A549 (cell line): ENCODE measurements at regions of chr15 and their contacts with region 1.

Region 1: DNA sequence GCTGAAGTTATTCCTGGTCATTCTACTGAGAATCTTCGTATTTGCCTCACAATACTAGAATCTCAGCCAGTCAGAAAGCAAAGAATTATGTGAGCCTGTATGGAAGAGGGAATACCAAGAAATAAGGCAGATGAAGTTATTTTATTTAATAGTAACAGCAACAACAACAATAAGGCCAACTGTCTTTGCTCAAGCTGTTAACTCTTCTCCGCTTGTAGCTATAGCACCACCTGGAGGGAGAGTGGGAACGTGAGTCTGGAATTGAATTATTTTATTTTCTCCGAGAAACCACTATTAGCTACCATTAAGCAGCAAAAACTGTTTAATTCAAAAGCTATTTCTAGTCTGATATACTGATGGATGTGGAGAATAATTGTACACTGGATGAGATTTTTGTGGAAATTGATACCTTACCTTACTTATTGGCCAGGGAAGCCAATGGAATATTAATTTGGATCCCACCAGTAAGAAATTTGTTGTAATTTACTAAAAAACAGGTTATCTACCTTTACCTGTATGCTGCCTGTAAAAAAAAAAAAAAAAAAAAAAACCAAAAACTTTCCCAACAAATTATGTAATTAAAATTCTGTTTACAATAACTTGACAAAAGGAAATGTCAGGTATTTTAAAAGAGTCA is 50.1 kb downstream of the CALML4 start:
- DNase-seq: peak; percentile 39 to 77
- ATAC-seq: peak; percentile 81 to 89; a peak in 5 of 6 replicates
- H3K4me3 ChIP-seq: no peak overlapping the region
- H3K27ac ChIP-seq: no peak overlapping the region; a peak in 1 of 6 replicates
- H3K4me1 ChIP-seq: peaks cover 4% of the 10 kb centered on the region; the same call in 1 of the 3 replicates
- CTCF ChIP-seq: peak; percentile 99
- EP300 ChIP-seq: no peak
- POLR2A ChIP-seq: no peak
- RAD21 ChIP-seq: peak; percentile 96 to 97

Region 2: GRCh38 chr15:67839929-67840748 is 314.9 kb before region 1 on chr15 and contains the start of gene RNU6-1:
- CTCF ChIA-PET with region 1: interaction called, 12 read pairs
- POLR2A ChIA-PET with region 1: interaction called, 7 read pairs
- DNase-seq: peak; percentile 95 to 98
- ATAC-seq: peak; percentile 62 to 84
- H3K4me3 ChIP-seq: peak within 1 kb of the TSS; percentile 69
- H3K27ac ChIP-seq: peak within 1 kb of the TSS; percentile 87 to 92
- H3K4me1 ChIP-seq: peaks cover 13% of the 10 kb centered on the region
- CTCF ChIP-seq: no peak; the same call in 2 of the 3 replicates
- EP300 ChIP-seq: no peak
- POLR2A ChIP-seq: peak; percentile 83
- RAD21 ChIP-seq: peak in 1 of 2 experiments; percentile 1; a peak in 1 of 5 replicates
- polyA plus RNA-seq, gene RNU6-1: not detected in 2 replicates

Region 3: GRCh38 chr15:68053701-68054627 is 101.1 kb before region 1 on chr15 and contains the start of gene PIAS1:
- CTCF ChIA-PET with region 1: interaction called, 17 read pairs
- POLR2A ChIA-PET with region 1: interaction called, 10 read pairs
- DNase-seq: peak; percentile 91 to 95
- ATAC-seq: peak; percentile 92 to 95
- H3K4me3 ChIP-seq: peak within 1 kb of the TSS; percentile 90
- H3K27ac ChIP-seq: peak within 1 kb of the TSS; percentile 91 to 96
- H3K4me1 ChIP-seq: peaks cover 32% of the 10 kb centered on the region
- CTCF ChIP-seq: 0 out of 3 replicates have a peak, but pooled peaks have one; percentile 7
- EP300 ChIP-seq: no peak
- POLR2A ChIP-seq: peak; percentile 80
- RAD21 ChIP-seq: no peak; a peak in 2 of 5 replicates
- polyA plus RNA-seq, gene PIAS1: 49.5 and 53.7 TPM in 2 replicates

Region 4: DNA sequence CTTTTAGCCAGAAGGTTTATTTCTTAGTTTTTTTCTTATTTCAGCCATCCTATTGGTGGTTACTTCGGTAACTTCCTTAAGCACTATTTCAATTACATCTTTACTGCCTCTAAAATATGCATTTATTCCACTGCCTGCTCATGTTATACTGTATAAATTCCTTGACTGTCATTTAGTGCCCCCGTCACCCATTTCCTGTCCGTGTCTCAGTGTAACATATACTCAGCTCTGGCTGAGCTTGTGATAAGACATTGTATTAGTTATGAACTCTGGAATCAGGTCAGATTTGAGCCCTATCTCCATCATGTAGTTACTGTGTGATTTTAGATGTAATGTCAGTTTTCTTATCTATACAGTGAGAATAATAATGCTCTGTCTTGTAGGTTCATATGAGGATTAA is 76.7 kb before region 1 on chr15:
- CTCF ChIA-PET with region 1: no interaction called
- POLR2A ChIA-PET with region 1: no interaction called
- DNase-seq: no peak
- ATAC-seq: no peak
- H3K4me3 ChIP-seq: no peak overlapping the region
- H3K27ac ChIP-seq: no peak overlapping the region
- H3K4me1 ChIP-seq: peaks cover 14% of the 10 kb centered on the region; the same call in 1 of the 3 replicates
- CTCF ChIP-seq: no peak
- EP300 ChIP-seq: no peak
- POLR2A ChIP-seq: no peak
- RAD21 ChIP-seq: no peak

Region 5: GRCh38 chr15:68114356-68114755 is 40.7 kb before region 1 on chr15:
- CTCF ChIA-PET with region 1: interaction called, 10 read pairs
- POLR2A ChIA-PET with region 1: no interaction called
- DNase-seq: no peak
- ATAC-seq: no peak
- H3K4me3 ChIP-seq: peak overlapping the region; percentile 27
- H3K27ac ChIP-seq: no peak overlapping the region; a peak in 1 of 6 replicates
- H3K4me1 ChIP-seq: peaks cover 16% of the 10 kb centered on the region
- CTCF ChIP-seq: no peak
- EP300 ChIP-seq: no peak
- POLR2A ChIP-seq: no peak
- RAD21 ChIP-seq: no peak

Region 6: DNA sequence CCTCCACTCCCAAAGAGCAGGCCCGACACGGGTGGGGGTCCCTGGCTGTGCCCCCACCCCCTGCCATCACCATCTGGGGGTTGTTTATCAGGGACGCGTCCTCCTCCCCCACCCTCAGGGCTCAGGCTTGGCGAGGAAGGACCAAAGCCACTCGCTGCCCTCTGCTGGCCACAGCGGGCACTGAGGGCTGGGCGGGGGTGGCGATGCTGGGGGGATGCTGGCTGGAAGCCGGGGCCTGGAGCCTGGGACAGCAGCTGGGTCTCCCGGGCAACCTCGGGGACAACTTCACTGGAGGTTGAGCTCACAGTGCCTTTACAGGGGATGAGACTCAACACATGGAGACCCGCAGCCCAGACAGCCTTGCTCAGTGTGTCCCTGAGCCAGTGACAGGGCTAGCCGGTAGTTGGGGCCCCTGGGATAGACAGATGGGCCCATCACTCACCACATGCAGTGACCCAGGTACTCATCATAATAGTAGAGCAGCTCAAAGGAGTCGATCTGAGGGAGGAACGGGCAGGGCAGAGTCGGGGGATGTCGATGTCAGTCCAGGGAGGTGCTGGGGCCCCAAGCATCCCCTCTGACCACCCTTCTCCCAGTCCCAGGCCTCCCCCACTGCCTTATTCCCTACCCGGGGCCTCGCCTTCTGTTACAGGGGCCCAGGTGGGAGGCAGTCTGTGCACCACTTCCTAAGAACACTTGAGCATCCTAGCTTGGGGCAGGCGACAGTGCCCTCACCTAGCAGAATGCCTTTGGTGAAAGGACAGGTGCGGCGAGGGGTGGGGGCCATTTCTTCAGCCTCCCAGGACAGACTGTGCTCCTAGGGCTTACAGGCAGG is 56.0 kb after region 1 on chr15:
- CTCF ChIA-PET with region 1: interaction called, 10 read pairs
- POLR2A ChIA-PET with region 1: no interaction called
- DNase-seq: peak; percentile 42 to 72
- ATAC-seq: peak; percentile 77 to 89
- H3K4me3 ChIP-seq: no peak overlapping the region
- H3K27ac ChIP-seq: peak overlapping the region in 1 of 2 experiments; percentile 40; a peak in 1 of 6 replicates
- H3K4me1 ChIP-seq: no peaks in the 10 kb centered on the region
- CTCF ChIP-seq: peak; percentile 74
- EP300 ChIP-seq: no peak
- POLR2A ChIP-seq: no peak
- RAD21 ChIP-seq: peak; percentile 63 to 73

Region 7: GRCh38 chr15:68402432-68403160 is 247.6 kb after region 1 on chr15:
- CTCF ChIA-PET with region 1: no interaction called
- POLR2A ChIA-PET with region 1: no interaction called
- DNase-seq: no peak
- ATAC-seq: no peak
- H3K4me3 ChIP-seq: no peak overlapping the region
- H3K27ac ChIP-seq: peak overlapping the region; percentile 28 to 73; a peak in 3 of 6 replicates
- H3K4me1 ChIP-seq: peaks cover 9% of the 10 kb centered on the region
- CTCF ChIP-seq: no peak
- EP300 ChIP-seq: no peak
- POLR2A ChIP-seq: no peak
- RAD21 ChIP-seq: no peak